Motor neuron (in vitro differentiated cells): ENCODE measurements at regions of chr6 and their contacts with region 1.

Region 1: DNA sequence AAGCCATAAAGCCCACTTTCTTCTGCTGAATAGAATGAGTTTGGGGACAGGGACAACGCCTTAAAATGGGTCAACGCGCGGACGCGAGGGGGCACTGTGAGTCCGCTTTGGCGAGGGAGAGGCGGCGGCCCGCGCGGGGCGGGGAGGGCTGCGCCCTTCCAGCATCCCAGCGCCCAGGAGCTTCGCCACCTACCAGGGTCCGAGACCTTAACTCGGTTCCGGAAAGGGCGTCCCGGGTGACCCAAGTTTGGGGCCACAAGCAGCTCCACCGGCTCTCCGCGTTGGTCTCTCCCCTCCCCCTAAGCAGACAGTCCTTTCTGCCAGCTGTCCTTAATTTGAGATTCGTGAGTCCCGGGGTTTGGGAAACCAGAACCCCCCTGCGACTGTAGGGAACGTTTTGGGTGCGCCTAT is 1.8 kb upstream of the SAMD5 start:
- ATAC-seq: peak; percentile 11 to 52 (median 45)
- H3K4me3 ChIP-seq: peak overlapping the region; percentile 50 to 64 (median 55)
- H3K27ac ChIP-seq: no peak overlapping the region
- H3K4me1 ChIP-seq: peaks cover 0 to 16% of the 10 kb centered on the region in 2 donors

Region 2: GRCh38 chr6:147651249-147652063 is 144.7 kb after region 1 on chr6:
- in situ Hi-C with region 1: loop called in 1 of 9 experiments (anchors 25 kb)
- ATAC-seq: peak in 4 of 8 experiments; percentile 39 to 94 (median 89)
- H3K4me3 ChIP-seq: no peak overlapping the region
- H3K27ac ChIP-seq: no peak overlapping the region
- H3K4me1 ChIP-seq: no peaks in the 10 kb centered on the region

Region 3: DNA sequence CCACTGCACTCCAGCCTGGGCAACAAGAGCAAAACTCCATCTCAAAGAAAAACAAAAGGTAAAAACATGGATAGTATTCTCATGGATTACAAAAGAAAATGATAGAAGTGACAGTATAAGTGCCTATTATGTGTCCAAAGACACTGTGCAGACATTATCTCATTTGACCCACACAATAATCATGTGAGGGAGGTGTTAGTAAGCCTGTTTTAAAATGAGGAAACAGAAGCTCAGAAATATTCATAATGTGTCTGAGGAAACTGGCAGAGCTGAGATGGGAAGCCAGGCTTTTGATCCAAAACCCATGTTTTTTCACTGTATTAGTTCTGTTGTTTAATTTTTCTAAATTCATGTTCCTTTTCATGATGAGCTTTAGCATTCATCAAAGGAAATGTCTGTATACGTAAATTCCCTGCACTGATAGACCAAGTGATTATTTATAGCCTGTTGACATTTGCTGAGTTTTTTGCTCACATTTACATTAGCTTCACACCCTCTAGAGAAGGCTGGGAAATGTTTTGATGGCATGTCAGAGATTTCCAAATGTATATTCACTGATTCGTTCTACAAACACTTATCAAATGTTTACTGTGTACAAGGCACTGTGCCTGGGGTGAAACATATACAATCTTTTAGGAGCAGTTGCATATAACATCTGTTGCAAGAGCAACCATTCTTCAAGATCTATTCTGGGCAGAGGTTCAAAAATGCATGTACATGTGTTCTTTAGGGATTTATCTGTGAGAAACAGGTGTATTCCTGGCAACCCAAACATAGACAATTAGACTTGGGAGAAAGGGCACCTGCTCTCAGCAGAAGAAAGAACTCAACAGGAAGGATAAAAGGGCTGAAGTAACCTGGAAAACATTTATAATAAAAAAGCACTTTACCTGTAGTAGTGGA is 333.2 kb after region 1 on chr6:
- in situ Hi-C with region 1: loop called in 1 of 9 experiments (anchors 25 kb)
- ATAC-seq: peak; percentile 36 to 91 (median 82)
- H3K4me3 ChIP-seq: no peak overlapping the region
- H3K27ac ChIP-seq: no peak overlapping the region
- H3K4me1 ChIP-seq: peaks cover 11 to 34% of the 10 kb centered on the region in 2 donors

Region 4: DNA sequence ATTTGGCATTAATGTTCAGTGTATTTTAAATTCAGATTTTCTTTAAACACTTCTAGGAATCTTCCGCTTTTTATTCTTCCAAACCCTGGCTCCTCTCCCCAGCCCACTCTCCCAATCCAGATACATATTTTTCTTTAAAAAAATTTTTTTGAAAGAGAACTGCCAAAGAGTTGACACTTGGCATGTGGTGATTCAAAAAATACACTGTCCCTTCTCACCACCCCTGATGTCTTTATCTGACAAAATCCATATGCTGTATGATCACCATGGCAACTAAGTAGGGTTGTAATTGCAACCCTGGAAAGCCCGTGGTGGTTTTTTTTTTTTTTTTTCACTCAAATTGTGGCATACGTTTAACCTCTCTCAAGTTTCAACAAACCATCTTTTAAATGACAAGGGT is 480.1 kb after region 1 on chr6:
- in situ Hi-C with region 1: loop called in 1 of 9 experiments (anchors 25 kb)
- ATAC-seq: no peak
- H3K4me3 ChIP-seq: no peak overlapping the region
- H3K27ac ChIP-seq: no peak overlapping the region
- H3K4me1 ChIP-seq: peaks cover 12 to 24% of the 10 kb centered on the region in 2 donors

Region 5: DNA sequence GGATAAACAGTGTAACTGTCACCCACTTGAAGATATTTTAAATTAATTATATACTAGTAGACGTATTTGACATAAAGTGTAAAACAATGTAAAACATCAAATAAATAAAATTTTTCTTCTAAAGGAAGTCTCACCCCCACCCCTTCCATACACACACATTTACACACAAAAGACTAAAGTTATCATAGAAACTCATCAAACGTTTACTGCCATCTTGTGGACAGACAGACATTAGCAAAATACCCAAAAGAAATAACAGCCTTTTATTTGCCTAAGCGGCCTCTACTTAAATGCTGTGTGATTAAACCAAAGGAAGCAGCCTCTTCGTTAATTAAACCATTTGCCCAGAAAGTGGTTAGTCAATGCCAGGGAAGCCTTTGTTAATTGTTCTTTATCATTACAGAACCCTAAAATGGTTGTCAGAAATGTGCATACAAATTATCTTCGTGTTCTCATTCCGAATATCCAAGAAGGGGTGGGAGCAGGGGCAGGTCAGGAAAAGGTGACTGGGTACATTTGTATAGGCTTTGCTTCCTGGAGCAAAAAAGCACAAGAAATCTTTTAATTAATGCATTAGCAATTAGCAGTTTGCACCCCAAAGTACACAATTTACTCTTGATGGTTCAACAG is 659.7 kb after region 1 on chr6:
- in situ Hi-C with region 1: loop called in 6 of 9 experiments (anchors 25 kb)
- ATAC-seq: peak in 4 of 8 experiments; percentile 37 to 69 (median 52)
- H3K4me3 ChIP-seq: no peak overlapping the region
- H3K27ac ChIP-seq: no peak overlapping the region
- H3K4me1 ChIP-seq: peaks cover 14 to 20% of the 10 kb centered on the region in 2 donors

Region 6: GRCh38 chr6:148464319-148465010 is 957.8 kb after region 1 on chr6:
- in situ Hi-C with region 1: loop called in 2 of 9 experiments (anchors 25 kb)
- ATAC-seq: peak; percentile 72 to 88 (median 76)
- H3K4me3 ChIP-seq: no peak overlapping the region
- H3K27ac ChIP-seq: no peak overlapping the region
- H3K4me1 ChIP-seq: peaks cover 5 to 10% of the 10 kb centered on the region in 2 donors